ENCODE measurements at regions of chr11 and their contacts with region 1.

Region 1: GRCh38 chr11:72326151-72326848 is 82.3 kb upstream of the PHOX2A start:
- DNase-seq: no peak
- H3K4me3 Mint-ChIP-seq: no peak overlapping the region
- H3K27ac Mint-ChIP-seq: peak overlapping the region; percentile 91
- H3K4me1 Mint-ChIP-seq: peaks cover 39% of the 10 kb centered on the region
- H3K27me3 Mint-ChIP-seq: no peaks in the 10 kb centered on the region

Region 2: DNA sequence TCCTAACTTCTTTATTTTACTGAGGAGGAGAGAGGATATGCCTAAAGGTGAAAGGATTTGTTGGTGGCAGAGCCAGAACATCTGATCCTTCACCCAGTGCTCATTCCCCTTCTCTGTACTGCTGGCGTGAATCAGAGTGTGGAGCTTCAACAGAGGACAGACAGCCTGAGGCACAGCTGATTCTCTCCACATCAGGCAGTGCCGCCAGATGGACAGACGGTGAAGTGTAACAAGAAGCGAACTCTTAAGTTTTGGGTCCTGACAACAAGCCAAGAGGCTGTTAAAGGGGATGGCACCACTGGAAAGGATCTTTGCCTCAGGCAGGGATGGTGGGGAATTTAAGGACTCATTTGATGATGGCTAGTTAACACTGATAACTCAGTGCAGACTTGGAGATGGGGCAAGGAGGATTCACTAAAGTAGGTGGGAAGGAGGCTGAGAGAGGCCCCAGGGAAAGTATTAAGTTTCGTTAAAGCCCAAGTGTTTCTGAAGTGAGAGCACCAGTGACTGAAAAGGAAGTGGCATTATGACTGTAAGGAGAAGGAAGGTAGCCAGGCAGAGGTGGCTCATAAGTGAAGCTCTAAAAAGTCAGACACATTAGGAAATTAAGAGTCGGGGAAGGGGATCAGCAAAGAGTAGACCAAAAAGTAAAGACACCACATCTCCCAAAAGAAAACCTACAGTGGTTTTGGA is 26.7 kb after region 1 on chr11:
- intact Hi-C with region 1: loop called (anchors 1 kb)
- DNase-seq: no peak
- H3K4me3 Mint-ChIP-seq: no peak overlapping the region
- H3K27ac Mint-ChIP-seq: no peak overlapping the region
- H3K4me1 Mint-ChIP-seq: no peaks in the 10 kb centered on the region
- H3K27me3 Mint-ChIP-seq: no peaks in the 10 kb centered on the region

Region 3: DNA sequence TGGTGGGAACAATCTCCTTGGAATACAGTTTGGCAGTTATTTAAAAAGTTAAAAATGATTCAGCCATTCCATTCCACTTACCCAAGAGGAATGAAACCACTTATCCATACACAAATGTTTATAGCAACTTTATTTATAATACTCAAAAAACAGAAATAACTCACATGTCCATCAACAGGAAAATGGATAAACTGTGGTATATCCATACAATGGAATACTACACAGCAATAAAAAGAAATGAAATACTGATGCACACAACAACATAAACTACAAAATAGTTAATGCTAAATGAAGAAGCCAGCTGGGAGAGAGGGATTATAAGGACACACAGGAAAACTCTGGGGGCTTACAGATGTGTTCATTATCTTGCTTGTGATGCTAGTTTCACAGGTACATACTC is 751.2 kb after region 1 on chr11:
- intact Hi-C with region 1: no loop called
- DNase-seq: no peak
- H3K4me3 Mint-ChIP-seq: no peak overlapping the region
- H3K27ac Mint-ChIP-seq: no peak overlapping the region
- H3K4me1 Mint-ChIP-seq: peaks cover 34% of the 10 kb centered on the region
- H3K27me3 Mint-ChIP-seq: no peaks in the 10 kb centered on the region

Measured in activated T-helper 1 cell treated with anti-CD3 and anti-CD28 coated beads, Interleukin-12 subunit alpha, Interleukin-12 subunit beta, Interleukin-2, Interleukin-4 antibody, amounts not matched to agents 30 ng/mL and 10 ng/mL and 1 ng/mL, durations not matched to agents 14 hours and 24 hours and 36 hours (primary cell).